A673 (cell line): ENCODE measurements at regions of chr2 and their contacts with region 1.

Region 1: DNA sequence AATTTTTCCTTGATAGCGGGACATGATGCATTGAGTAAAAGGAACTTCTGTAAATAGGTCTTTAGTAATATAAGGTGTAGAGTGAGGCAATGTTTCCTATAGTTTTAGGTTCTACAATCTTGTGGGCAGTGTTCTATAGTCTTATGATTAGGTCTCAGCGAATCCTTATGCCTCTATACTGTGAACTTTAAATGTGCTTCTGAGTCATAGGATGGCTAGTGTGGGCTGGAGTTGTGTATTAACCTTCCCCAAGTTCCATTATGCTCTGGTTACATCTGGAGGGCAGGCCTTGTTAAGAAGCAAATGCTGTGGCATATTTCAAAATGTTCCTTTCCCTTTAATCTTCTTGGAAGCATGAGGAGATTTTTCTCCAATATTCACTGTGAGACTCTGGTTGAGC is 73.5 kb downstream of the ROCK2 start:
- DNase-seq: no peak
- H3K4me3 ChIP-seq: no peak overlapping the region
- H3K27ac ChIP-seq: no peak overlapping the region
- H3K4me1 ChIP-seq: no peaks in the 10 kb centered on the region
- H3K27me3 ChIP-seq: no peaks in the 10 kb centered on the region
- CTCF ChIP-seq: no peak

Region 2: DNA sequence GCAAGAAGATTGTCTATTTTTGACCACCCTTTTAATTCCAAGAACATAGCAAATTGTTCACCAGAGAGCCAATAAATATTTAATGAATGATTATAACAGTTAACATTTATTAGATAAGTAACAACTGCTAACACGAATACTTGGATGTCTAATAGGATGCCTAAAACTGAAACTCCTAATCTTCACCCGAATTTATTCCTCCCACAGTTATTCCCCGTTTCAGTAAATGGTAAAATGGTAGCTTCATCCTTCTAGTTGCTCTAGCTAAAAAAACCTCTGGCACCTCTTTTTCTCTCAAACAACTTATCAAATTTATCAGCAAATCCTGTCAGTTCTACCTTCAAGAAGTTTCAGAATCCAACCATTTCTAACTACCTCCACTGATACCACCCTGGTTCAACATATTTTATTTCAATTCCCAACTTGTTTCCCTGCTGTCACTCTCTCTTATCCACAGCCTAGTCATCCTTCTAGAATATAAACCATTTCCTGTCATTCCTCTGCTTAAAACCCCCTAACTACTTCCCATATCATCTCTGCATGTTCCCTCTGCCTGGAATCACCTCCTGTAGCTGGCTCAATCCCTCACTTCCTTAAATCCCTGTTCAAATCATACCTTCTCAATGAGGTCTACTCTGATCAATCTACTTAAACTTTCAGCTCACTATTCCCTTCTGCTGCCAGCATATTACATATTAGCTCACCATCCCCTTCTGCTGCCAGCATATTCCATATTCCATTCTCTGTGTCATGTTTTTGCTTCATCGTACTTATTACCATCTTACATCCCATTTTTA is 20.3 kb before region 1 on chr2:
- CTCF ChIA-PET with region 1: interaction called, 12 read pairs
- POLR2A ChIA-PET with region 1: no interaction called
- intact Hi-C with region 1: no loop called
- DNase-seq: no peak
- H3K4me3 ChIP-seq: no peak overlapping the region
- H3K27ac ChIP-seq: no peak overlapping the region
- H3K4me1 ChIP-seq: no peaks in the 10 kb centered on the region
- H3K27me3 ChIP-seq: no peaks in the 10 kb centered on the region
- CTCF ChIP-seq: no peak